ENCODE measurements at regions of chr17 and their contacts with region 1.

Region 1: DNA sequence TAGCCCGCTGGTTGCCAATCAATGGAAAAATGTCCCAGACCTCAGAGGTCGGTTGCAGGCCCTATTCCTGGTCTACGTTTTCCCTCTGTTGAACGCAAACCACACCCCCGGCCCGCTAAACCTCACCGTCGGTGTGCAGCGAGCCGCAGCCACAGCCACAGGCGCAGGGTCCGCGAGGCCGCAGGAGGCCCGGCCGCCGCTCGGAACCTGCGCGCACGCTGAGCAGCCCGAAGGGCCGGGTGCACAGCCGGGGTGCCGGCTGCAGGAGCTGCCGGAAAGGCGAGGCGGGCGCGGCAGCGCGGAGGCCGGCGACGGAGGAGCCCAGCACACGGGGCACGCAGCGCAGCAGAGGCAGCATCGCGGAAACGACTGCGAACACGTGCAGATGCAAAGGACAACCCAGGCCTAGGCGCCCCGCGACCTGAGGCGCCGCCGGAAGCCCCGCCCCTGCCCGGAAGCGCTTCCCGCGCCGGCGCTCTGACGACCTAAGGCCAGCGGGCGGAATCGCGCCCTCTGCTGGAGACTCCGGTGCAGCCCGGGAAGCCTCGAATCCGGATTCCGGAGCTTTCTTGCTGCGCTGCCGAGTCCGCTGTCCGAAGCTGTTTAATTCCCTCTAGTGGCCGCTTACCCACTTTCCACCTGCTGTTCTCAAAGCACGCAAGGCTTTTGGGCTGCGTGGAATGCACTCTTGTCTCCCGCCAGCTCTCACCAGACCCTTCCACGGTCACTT is at the start of gene C1QBP:
- DNase-seq: peak; percentile 96
- ATAC-seq: peak; percentile 95
- H3K4me3 ChIP-seq: peak within 1 kb of the TSS; percentile 52 to 74 (median 67)
- H3K4me3 Mint-ChIP-seq: peak within 1 kb of the TSS; percentile 79
- H3K27ac ChIP-seq: peak within 1 kb of the TSS; percentile 66 to 81
- H3K27ac Mint-ChIP-seq: peak within 1 kb of the TSS; percentile 93
- H3K4me1 ChIP-seq: peaks cover 14 to 26% of the 10 kb centered on the region in 2 donors
- H3K4me1 Mint-ChIP-seq: peaks cover 31% of the 10 kb centered on the region
- H3K27me3 ChIP-seq: no peaks in the 10 kb centered on the region
- H3K27me3 Mint-ChIP-seq: no peaks in the 10 kb centered on the region
- CTCF ChIP-seq: peak; percentile 99
- total RNA-seq, gene C1QBP: 60.1 and 62.2 TPM in 2 replicates

Region 2: GRCh38 chr17:5249615-5250014 is 189.3 kb before region 1 on chr17:
- CTCF ChIA-PET with region 1: interaction called, 18 read pairs
- POLR2A ChIA-PET with region 1: no interaction called
- intact Hi-C with region 1: loop called (anchors 1 kb)
- DNase-seq: peak; percentile 84
- ATAC-seq: peak; percentile 86
- H3K4me3 ChIP-seq: no peak overlapping the region
- H3K4me3 Mint-ChIP-seq: no peak overlapping the region
- H3K27ac ChIP-seq: no peak overlapping the region
- H3K27ac Mint-ChIP-seq: peak overlapping the region; percentile 22
- H3K4me1 ChIP-seq: peaks cover 21 to 24% of the 10 kb centered on the region in 2 donors
- H3K4me1 Mint-ChIP-seq: peaks cover 40% of the 10 kb centered on the region
- H3K27me3 ChIP-seq: no peaks in the 10 kb centered on the region
- H3K27me3 Mint-ChIP-seq: no peaks in the 10 kb centered on the region
- CTCF ChIP-seq: peak; percentile 74

Region 3: GRCh38 chr17:5419356-5419958 is 19.4 kb before region 1 on chr17 and contains the start of gene NUP88:
- CTCF ChIA-PET with region 1: interaction called, 35 read pairs
- POLR2A ChIA-PET with region 1: interaction called, 11 read pairs
- intact Hi-C with region 1: loop called (anchors 1 kb)
- DNase-seq: peak; percentile 98
- ATAC-seq: peak; percentile 83
- H3K4me3 ChIP-seq: peak within 1 kb of the TSS; percentile 93 to 100 (median 99)
- H3K4me3 Mint-ChIP-seq: peak within 1 kb of the TSS; percentile 94
- H3K27ac ChIP-seq: peak within 1 kb of the TSS; percentile 98 to 100
- H3K27ac Mint-ChIP-seq: peak within 1 kb of the TSS; percentile 99
- H3K4me1 ChIP-seq: peaks cover 25 to 35% of the 10 kb centered on the region in 2 donors
- H3K4me1 Mint-ChIP-seq: peaks cover 49% of the 10 kb centered on the region
- H3K27me3 ChIP-seq: no peaks in the 10 kb centered on the region
- H3K27me3 Mint-ChIP-seq: no peaks in the 10 kb centered on the region
- CTCF ChIP-seq: no peak
- total RNA-seq, gene NUP88: 221 and 238 TPM in 2 replicates

Region 4: DNA sequence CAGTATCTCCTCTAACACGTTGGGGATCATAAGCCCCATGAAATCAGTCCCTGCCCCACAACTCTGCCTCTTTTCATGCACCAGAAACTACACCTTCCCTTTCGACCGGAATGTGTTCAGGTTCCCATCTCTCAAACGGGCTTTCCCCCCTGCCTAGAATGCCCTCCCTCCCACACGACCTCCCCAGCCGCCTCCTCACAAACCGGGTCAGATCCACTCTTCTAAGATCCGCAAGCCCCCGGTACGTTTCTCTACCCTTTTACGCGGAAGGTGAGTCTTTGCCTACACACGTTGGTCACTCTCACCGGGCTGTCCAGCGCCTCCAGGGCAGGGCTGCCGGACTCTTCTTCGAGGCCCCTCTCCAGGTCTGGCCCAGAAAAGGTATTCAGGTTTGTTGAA is 29.2 kb after region 1 on chr17:
- CTCF ChIA-PET with region 1: interaction called, 11 read pairs
- POLR2A ChIA-PET with region 1: no interaction called
- intact Hi-C with region 1: loop called (anchors 1 kb)
- DNase-seq: no peak
- ATAC-seq: no peak
- H3K4me3 ChIP-seq: peak overlapping the region; percentile 61 to 94 (median 86)
- H3K4me3 Mint-ChIP-seq: peak overlapping the region; percentile 90
- H3K27ac ChIP-seq: peak overlapping the region in 1 of 2 donors; percentile 60
- H3K27ac Mint-ChIP-seq: peak overlapping the region; percentile 32
- H3K4me1 ChIP-seq: peaks cover 11 to 20% of the 10 kb centered on the region in 2 donors
- H3K4me1 Mint-ChIP-seq: peaks cover 29% of the 10 kb centered on the region
- H3K27me3 ChIP-seq: no peaks in the 10 kb centered on the region
- H3K27me3 Mint-ChIP-seq: no peaks in the 10 kb centered on the region
- CTCF ChIP-seq: no peak

Region 5: GRCh38 chr17:5486204-5487124 is 47.6 kb after region 1 on chr17 and contains the start of gene MIS12:
- CTCF ChIA-PET with region 1: no interaction called
- POLR2A ChIA-PET with region 1: no interaction called
- intact Hi-C with region 1: loop called (anchors 1 kb)
- DNase-seq: peak; percentile 98
- ATAC-seq: peak; percentile 90
- H3K4me3 ChIP-seq: peak within 1 kb of the TSS; percentile 90 to 99 (median 92)
- H3K4me3 Mint-ChIP-seq: peak within 1 kb of the TSS; percentile 94
- H3K27ac ChIP-seq: peak within 1 kb of the TSS; percentile 99 to 100
- H3K27ac Mint-ChIP-seq: peak within 1 kb of the TSS; percentile 97
- H3K4me1 ChIP-seq: peaks cover 17 to 26% of the 10 kb centered on the region in 2 donors
- H3K4me1 Mint-ChIP-seq: peaks cover 42% of the 10 kb centered on the region
- H3K27me3 ChIP-seq: no peaks in the 10 kb centered on the region
- H3K27me3 Mint-ChIP-seq: no peaks in the 10 kb centered on the region
- CTCF ChIP-seq: no peak
- total RNA-seq, gene MIS12: 33.2 and 41.1 TPM in 2 replicates

Region 6: GRCh38 chr17:5536866-5537650 is 98.2 kb after region 1 on chr17:
- CTCF ChIA-PET with region 1: no interaction called
- POLR2A ChIA-PET with region 1: no interaction called
- intact Hi-C with region 1: no loop called
- DNase-seq: no peak
- ATAC-seq: no peak
- H3K4me3 ChIP-seq: no peak overlapping the region
- H3K4me3 Mint-ChIP-seq: no peak overlapping the region
- H3K27ac ChIP-seq: no peak overlapping the region
- H3K27ac Mint-ChIP-seq: no peak overlapping the region
- H3K4me1 ChIP-seq: no peaks in the 10 kb centered on the region
- H3K4me1 Mint-ChIP-seq: no peaks in the 10 kb centered on the region
- H3K27me3 ChIP-seq: no peaks in the 10 kb centered on the region
- H3K27me3 Mint-ChIP-seq: no peaks in the 10 kb centered on the region
- CTCF ChIP-seq: no peak

Measured in B cell (primary cell).